Activated CD8-positive, alpha-beta T cell treated with anti-CD3 and anti-CD28 coated beads for 36 hours (primary cell): ENCODE measurements at regions of chr17 and their contacts with region 1.

Region 1: GRCh38 chr17:41665566-41666236 is 23.0 kb upstream of the EIF1 start:
- DNase-seq: peak; percentile 92
- ATAC-seq: peak; percentile 81
- H3K4me3 Mint-ChIP-seq: peak overlapping the region; percentile 81
- H3K27ac Mint-ChIP-seq: peak overlapping the region; percentile 100
- H3K4me1 Mint-ChIP-seq: peaks cover 33% of the 10 kb centered on the region
- H3K27me3 Mint-ChIP-seq: peaks cover 1% of the 10 kb centered on the region
- CTCF ChIP-seq: peak; percentile 95

Region 2: DNA sequence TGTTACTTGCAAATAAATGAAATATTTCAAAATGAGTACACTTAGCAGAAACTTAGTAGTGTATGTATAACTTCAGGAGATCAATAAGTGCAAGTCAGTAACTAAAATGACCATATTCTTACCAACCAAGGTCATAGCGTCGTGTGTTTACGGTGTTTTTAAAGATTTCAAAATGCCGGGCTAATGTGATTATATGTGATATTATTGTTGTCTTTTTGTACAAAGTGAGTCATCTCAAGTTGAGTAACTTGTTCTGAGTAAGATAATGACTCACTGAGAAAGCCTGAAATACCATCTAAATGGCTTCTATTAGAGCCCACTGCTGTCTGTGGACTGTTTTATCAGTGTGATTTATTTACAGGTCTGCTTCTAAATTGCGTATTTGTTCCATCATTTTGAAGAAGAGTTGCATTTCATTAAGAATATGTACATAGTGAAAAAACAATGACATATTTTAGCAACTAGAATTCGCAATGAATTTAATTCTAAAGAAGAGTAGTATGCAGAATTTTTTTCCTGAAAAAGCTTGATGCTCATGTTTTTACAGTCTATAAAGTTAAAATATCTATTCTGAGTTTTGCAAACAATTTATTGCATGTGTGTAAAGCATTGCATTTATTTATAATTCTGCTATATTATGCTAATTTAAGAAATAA is 811.4 kb before region 1 on chr17:
- CTCF ChIA-PET with region 1: interaction called, 29 read pairs
- POLR2A ChIA-PET with region 1: no interaction called
- intact Hi-C with region 1: no loop called
- DNase-seq: no peak
- ATAC-seq: no peak
- H3K4me3 Mint-ChIP-seq: no peak overlapping the region
- H3K27ac Mint-ChIP-seq: no peak overlapping the region
- H3K4me1 Mint-ChIP-seq: peaks cover 3% of the 10 kb centered on the region
- H3K27me3 Mint-ChIP-seq: peaks cover 19% of the 10 kb centered on the region
- CTCF ChIP-seq: no peak

Region 3: GRCh38 chr17:41322094-41322902 is 343.4 kb before region 1 on chr17:
- CTCF ChIA-PET with region 1: interaction called, 11 read pairs
- POLR2A ChIA-PET with region 1: no interaction called
- intact Hi-C with region 1: no loop called
- DNase-seq: no peak
- ATAC-seq: peak; percentile 74
- H3K4me3 Mint-ChIP-seq: no peak overlapping the region
- H3K27ac Mint-ChIP-seq: no peak overlapping the region
- H3K4me1 Mint-ChIP-seq: peaks cover 15% of the 10 kb centered on the region
- H3K27me3 Mint-ChIP-seq: no peaks in the 10 kb centered on the region
- CTCF ChIP-seq: peak; percentile 82

Region 4: DNA sequence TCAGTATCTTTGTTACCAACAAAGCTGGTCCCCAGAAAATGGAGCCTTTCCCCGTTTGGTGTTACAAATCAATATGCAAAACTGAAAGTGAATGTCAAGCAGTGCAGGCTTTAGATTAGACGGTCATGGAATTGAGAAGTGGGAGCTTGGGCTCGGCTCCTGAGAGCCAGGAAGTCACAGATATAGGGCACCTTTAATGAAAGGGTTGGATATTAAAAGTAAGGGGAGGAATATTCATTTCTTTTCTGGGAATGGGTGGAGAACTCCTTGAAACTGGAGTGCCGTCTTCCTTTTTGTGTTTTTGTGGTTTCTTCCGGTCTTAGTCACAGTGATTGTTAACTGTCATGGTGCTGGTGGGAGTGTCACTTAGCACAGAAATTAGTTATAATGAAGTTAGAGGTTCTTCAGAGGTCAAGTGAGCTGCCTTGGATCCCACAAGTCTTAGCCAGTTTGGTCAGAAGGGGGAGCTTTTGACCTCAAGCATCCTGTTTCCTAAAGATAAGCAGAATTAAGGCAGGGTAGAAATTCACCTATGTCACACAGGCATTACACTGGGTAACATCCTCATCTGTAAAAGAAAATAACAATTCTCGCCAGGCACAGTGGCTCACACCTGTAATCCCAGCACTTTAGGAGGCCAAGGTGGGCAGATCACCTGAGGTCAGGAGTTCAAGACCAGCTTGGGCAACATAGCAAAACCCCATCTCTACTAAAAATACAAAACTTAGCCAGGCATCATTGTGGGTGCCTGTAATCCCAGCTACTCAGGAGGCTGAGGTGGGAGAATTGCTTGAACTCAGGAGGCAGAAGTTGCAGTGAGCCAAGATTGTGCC is 13.4 kb after region 1 on chr17:
- CTCF ChIA-PET with region 1: interaction called, 117 read pairs
- POLR2A ChIA-PET with region 1: interaction called, 51 read pairs
- intact Hi-C with region 1: no loop called
- DNase-seq: peak; percentile 87
- ATAC-seq: peak; percentile 88
- H3K4me3 Mint-ChIP-seq: peak overlapping the region; percentile 88
- H3K27ac Mint-ChIP-seq: peak overlapping the region; percentile 97
- H3K4me1 Mint-ChIP-seq: peaks cover 48% of the 10 kb centered on the region
- H3K27me3 Mint-ChIP-seq: no peaks in the 10 kb centered on the region
- CTCF ChIP-seq: no peak

Region 5: GRCh38 chr17:41695954-41696756 is 30.5 kb after region 1 on chr17:
- CTCF ChIA-PET with region 1: interaction called, 117 read pairs
- POLR2A ChIA-PET with region 1: interaction called, 104 read pairs
- intact Hi-C with region 1: no loop called
- DNase-seq: peak; percentile 75
- ATAC-seq: peak; percentile 70
- H3K4me3 Mint-ChIP-seq: no peak overlapping the region
- H3K27ac Mint-ChIP-seq: peak overlapping the region; percentile 66
- H3K4me1 Mint-ChIP-seq: peaks cover 24% of the 10 kb centered on the region
- H3K27me3 Mint-ChIP-seq: no peaks in the 10 kb centered on the region
- CTCF ChIP-seq: peak; percentile 70